Uterus (tissue), 4 donors: ENCODE measurements at regions of chr6 and their contacts with region 1.

Region 1: DNA sequence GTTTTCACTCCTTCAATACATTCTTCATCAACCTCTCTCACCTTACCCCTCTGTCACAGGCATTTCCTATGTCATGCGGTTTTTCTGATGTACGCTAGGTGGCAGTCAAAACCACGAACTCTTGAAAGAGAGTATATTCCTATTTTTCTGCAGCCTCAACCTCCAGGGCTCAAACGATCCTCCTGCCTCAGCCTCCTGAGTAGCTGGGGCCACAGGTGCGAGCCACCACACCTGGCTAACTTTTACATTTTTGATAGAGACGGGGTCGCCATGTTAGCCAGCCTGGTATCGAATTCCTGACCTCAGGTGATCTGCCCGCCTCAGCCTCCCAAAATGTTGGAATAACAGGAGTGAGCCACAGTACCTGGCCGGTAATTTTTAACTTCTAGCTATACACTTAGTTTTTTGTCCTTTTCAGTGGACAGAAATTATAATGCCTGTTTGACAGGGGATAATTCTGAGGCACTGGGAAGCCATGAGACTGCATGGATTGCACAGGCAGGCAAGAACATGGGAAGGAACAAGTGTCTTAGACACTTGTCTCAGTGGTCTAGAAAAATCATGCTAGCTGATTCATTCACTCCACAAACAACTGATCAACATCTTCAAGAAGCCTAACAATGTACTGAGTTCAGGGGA is 22.5 kb upstream of the HFE start:
- DNase-seq: no peak
- H3K4me3 ChIP-seq: no peak overlapping the region
- H3K27ac ChIP-seq: no peak overlapping the region
- H3K4me1 ChIP-seq: no peaks in the 10 kb centered on the region
- H3K27me3 ChIP-seq: no peaks in the 10 kb centered on the region
- CTCF ChIP-seq: peak; percentile 73 to 78 (median 76)
- POLR2A ChIP-seq: no peak

Region 2: DNA sequence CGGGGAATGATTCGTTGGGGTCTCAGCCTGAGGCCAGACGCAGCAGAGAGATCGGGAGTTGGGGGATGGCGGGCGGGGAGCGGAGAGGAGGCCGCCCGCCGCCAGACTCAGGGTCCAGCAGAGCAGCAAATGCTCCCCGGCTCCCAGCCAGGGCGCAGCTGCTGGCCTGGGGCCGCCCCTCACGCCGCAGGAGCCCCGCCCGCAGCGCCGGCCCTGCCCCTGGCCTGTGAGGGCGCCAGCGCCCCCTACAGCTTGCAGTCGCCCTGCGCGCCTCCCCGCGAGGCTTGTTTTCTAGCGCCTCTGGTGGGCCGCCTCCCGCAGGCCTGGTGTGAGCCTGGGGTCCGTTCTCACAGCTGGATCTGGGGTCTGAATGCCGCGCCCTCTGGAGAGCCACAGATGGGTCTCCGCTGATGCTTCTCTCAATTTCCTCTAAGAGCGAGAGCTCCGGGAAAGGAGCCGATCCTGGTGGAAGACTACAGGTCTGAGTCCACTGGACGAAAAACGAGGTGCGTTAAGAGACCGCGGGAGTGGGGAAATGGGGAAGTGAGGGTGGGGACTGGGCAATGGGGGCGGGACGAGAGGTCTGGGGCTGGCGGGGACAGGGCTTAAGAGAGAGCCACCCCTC is 72.2 kb before region 1 on chr6:
- intact Hi-C with region 1: no loop called
- DNase-seq: peak; percentile 94 to 98
- H3K4me3 ChIP-seq: peak overlapping the region; percentile 82
- H3K27ac ChIP-seq: peak overlapping the region; percentile 98 to 99
- H3K4me1 ChIP-seq: peaks cover 0 to 10% of the 10 kb centered on the region in 2 donors
- H3K27me3 ChIP-seq: no peaks in the 10 kb centered on the region
- CTCF ChIP-seq: peak; percentile 85 to 100 (median 99)
- POLR2A ChIP-seq: peak; percentile 80 to 94

Region 3: GRCh38 chr6:26097268-26097875 is 32.6 kb after region 1 on chr6:
- intact Hi-C with region 1: loop called (anchors 5 kb)
- DNase-seq: peak; percentile 58 to 70
- H3K4me3 ChIP-seq: no peak overlapping the region
- H3K27ac ChIP-seq: no peak overlapping the region
- H3K4me1 ChIP-seq: no peaks in the 10 kb centered on the region
- H3K27me3 ChIP-seq: no peaks in the 10 kb centered on the region
- CTCF ChIP-seq: peak; percentile 80 to 89 (median 86)
- POLR2A ChIP-seq: no peak

Region 4: GRCh38 chr6:26195376-26195923 is 130.7 kb after region 1 on chr6:
- intact Hi-C with region 1: no loop called
- DNase-seq: peak; percentile 77 to 94
- H3K4me3 ChIP-seq: peak overlapping the region; percentile 50 to 54
- H3K27ac ChIP-seq: peak overlapping the region; percentile 91 to 99
- H3K4me1 ChIP-seq: peaks cover 0 to 6% of the 10 kb centered on the region in 2 donors
- H3K27me3 ChIP-seq: peaks cover 0 to 3% of the 10 kb centered on the region in 2 donors
- CTCF ChIP-seq: no peak
- POLR2A ChIP-seq: peak; percentile 60 to 81